Activated naive CD4-positive, alpha-beta T cell treated with anti-CD3 and anti-CD28 coated beads for 36 hours (primary cell): ENCODE measurements at regions of chr1 and their contacts with region 1.

Region 1: DNA sequence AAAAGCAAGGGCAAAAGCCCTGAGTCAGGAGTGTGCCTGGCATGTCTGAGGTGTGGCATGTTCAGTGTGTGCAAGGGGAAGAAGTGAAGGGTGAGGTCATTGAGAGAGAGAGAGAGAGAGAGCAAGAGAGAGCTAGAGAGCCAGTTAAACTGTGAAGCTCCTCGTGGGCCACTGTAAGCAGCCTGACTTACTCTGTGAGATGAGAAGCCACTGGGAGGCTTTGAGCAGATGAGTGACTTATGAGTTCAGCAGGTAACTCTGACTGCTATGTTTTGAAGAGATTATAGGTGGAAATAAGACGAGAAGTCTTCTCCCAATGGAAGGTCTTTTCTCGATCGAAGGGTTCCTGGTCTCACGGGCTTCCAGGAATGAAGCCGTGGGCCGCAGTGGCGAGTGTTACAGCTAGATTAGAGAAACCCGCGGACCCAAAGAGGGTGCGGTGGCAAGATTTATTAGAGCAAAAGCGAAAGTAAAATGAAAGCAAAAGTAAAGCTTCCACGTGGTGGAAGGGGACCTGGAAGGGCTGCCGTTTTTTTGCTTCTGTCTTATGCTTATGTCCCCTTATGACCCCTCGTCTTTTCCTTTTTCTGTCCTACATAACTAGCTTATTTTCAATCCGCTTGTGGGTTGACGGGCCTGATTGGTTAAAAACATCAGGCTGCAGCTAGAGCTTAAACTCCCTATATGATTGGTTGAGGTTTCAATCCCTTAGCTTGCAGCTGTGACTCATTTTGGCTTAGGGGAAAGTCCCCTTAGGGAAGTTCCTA is 323.1 kb upstream of the FAM78B start:
- DNase-seq: peak; percentile 68
- H3K4me3 Mint-ChIP-seq: no peak overlapping the region
- H3K27ac Mint-ChIP-seq: no peak overlapping the region
- H3K4me1 Mint-ChIP-seq: peaks cover 14% of the 10 kb centered on the region
- H3K27me3 Mint-ChIP-seq: no peaks in the 10 kb centered on the region

Region 2: GRCh38 chr1:165630629-165631341 is 859.1 kb before region 1 on chr1 and contains the start of gene MGST3:
- CTCF ChIA-PET with region 1: no interaction called
- intact Hi-C with region 1: loop called (anchors 10 kb)
- DNase-seq: peak; percentile 97
- H3K4me3 Mint-ChIP-seq: no peak within 1 kb of the TSS
- H3K27ac Mint-ChIP-seq: no peak within 1 kb of the TSS
- H3K4me1 Mint-ChIP-seq: peaks cover 19% of the 10 kb centered on the region
- H3K27me3 Mint-ChIP-seq: no peaks in the 10 kb centered on the region
- total RNA-seq, gene MGST3: 26.6 to 29.2 TPM

Region 3: GRCh38 chr1:165942927-165943597 is 546.8 kb before region 1 on chr1:
- CTCF ChIA-PET with region 1: no interaction called
- intact Hi-C with region 1: no loop called
- DNase-seq: no peak
- H3K4me3 Mint-ChIP-seq: no peak overlapping the region
- H3K27ac Mint-ChIP-seq: no peak overlapping the region
- H3K4me1 Mint-ChIP-seq: no peaks in the 10 kb centered on the region
- H3K27me3 Mint-ChIP-seq: peaks cover 7% of the 10 kb centered on the region

Region 4: GRCh38 chr1:166166695-166167571 is 322.9 kb before region 1 on chr1 and contains the start of gene FAM78B:
- CTCF ChIA-PET with region 1: no interaction called
- intact Hi-C with region 1: loop called (anchors 2 kb)
- DNase-seq: peak; percentile 65
- H3K4me3 Mint-ChIP-seq: peak within 1 kb of the TSS; percentile 71
- H3K27ac Mint-ChIP-seq: no peak within 1 kb of the TSS
- H3K4me1 Mint-ChIP-seq: peaks cover 30% of the 10 kb centered on the region
- H3K27me3 Mint-ChIP-seq: peaks cover 55% of the 10 kb centered on the region
- total RNA-seq, gene FAM78B: 0.24 TPM in 1 of 2 experiments, not detected in the other

Region 5: DNA sequence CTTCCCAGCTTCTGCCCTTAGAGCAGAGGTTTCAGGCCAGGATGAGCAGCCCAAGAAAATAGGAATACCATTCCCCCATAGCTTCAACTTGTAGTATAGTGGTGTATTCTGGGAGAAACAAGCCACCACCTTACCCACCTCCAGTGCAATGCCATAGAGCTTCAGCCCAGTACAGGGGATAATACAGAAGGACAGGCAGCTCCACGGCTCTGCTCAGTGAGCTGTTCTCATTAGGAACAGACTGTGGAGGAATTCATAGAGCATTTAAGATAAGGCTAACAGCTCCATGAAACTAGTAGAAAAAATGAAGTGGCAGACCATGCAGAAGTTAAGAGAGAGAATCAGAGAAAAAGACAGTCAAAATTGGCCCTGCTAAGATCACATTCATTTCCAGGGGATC is 54.7 kb after region 1 on chr1:
- CTCF ChIA-PET with region 1: no interaction called
- intact Hi-C with region 1: no loop called
- DNase-seq: no peak
- H3K4me3 Mint-ChIP-seq: no peak overlapping the region
- H3K27ac Mint-ChIP-seq: no peak overlapping the region
- H3K4me1 Mint-ChIP-seq: no peaks in the 10 kb centered on the region
- H3K27me3 Mint-ChIP-seq: peaks cover 5% of the 10 kb centered on the region

Region 6: DNA sequence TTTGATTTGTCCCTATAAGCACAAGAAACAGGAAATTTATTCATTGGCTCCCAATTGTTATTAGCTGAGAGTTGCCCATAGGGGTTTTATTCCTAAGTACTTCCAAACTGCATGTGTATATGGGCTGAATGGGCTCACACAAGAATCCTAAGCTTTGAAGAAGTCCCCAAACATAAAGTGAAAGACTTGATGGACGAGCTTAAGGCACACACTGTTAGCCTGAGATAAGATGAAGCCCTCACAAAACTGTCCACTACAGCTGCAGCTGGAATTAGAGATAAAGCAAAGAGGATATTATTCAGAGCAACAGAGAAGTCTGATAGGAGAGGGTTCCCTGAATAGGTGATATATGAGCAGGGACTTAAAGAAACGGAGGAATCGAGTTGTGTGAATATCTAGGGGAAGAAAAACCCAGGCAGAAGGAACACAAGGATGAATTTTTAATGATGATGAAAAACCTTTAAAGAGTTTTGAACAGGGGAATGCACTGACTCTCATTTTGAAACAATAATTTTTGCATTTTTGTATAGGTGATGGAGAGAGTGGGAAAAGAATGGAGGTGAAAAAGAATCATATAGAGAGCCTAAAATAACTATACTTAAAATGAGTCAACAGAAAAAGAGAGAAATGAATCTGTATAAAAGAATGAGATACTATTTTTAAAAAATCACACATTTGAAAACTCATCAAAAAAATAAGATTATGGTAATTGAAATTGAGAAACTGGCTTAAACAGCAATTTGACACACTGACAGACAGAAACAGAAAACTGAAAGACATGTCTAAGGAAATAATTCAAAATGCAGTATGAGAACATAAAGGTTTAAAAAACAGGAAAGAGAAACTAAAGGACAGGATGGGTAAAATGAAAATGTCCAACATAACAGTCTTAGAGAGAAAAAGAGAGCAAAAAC is 215.8 kb after region 1 on chr1:
- CTCF ChIA-PET with region 1: no interaction called
- intact Hi-C with region 1: loop called (anchors 2 kb)
- DNase-seq: no peak
- H3K4me3 Mint-ChIP-seq: no peak overlapping the region
- H3K27ac Mint-ChIP-seq: peak overlapping the region; percentile 7
- H3K4me1 Mint-ChIP-seq: peaks cover 12% of the 10 kb centered on the region
- H3K27me3 Mint-ChIP-seq: peaks cover 37% of the 10 kb centered on the region

Region 7: DNA sequence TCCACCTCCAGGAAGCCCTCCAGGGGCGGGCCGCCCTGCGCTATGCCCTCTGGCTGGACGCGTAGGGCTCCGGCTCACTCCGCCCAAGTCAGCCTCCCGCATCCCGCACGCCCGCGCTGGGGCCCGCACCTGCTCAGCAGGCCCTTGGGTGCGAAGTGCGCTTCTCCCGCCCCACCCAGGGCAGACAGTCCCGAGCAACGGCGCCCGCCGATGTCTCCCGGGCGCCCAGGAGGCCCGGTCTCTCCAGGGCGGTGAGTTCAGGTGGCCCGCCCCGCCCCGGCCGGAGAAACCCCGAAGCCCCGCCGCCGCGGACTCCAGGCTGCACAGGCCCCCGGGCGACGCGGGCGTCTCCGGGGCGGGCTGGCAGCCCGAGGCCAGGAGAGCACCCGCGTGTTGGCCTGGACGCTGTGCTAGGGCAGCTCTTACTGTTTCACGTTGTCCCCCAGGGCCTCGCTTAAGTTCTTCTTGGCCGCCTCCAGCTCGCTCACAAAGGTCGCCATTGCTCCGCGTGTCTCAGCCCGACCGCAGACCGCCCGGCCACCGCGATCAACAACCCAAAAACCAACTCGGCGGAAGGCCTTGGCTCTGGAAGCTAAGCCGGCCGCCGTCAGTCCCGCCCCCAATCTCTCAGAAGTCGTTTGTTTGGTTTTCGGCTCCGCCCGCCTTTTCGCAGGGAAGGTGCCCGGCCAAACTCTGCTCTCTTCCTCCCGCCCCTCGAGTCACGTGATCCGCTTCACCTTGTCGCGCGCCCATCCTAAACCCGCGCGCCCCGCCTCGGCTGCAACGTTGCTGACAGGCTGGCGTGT is 386.1 kb after region 1 on chr1 and contains the start of gene TADA1:
- CTCF ChIA-PET with region 1: no interaction called
- intact Hi-C with region 1: loop called (anchors 2 kb)
- DNase-seq: peak; percentile 100
- H3K4me3 Mint-ChIP-seq: peak within 1 kb of the TSS; percentile 99
- H3K27ac Mint-ChIP-seq: peak within 1 kb of the TSS; percentile 97
- H3K4me1 Mint-ChIP-seq: peaks cover 37% of the 10 kb centered on the region
- H3K27me3 Mint-ChIP-seq: no peaks in the 10 kb centered on the region
- total RNA-seq, gene TADA1: 19.6 to 19.9 TPM

Region 8: GRCh38 chr1:166975361-166976129 is 485.7 kb after region 1 on chr1 and contains the start of gene ILDR2:
- CTCF ChIA-PET with region 1: no interaction called
- intact Hi-C with region 1: loop called (anchors 10 kb)
- DNase-seq: peak; percentile 84
- H3K4me3 Mint-ChIP-seq: peak within 1 kb of the TSS; percentile 91
- H3K27ac Mint-ChIP-seq: peak within 1 kb of the TSS; percentile 90
- H3K4me1 Mint-ChIP-seq: peaks cover 36% of the 10 kb centered on the region
- H3K27me3 Mint-ChIP-seq: peaks cover 10% of the 10 kb centered on the region
- total RNA-seq, gene ILDR2: 9.1 to 10.5 TPM